Posterior cingulate gyrus (tissue), 11 donors: ENCODE measurements at regions of chr4 and their contacts with region 1.

Region 1: DNA sequence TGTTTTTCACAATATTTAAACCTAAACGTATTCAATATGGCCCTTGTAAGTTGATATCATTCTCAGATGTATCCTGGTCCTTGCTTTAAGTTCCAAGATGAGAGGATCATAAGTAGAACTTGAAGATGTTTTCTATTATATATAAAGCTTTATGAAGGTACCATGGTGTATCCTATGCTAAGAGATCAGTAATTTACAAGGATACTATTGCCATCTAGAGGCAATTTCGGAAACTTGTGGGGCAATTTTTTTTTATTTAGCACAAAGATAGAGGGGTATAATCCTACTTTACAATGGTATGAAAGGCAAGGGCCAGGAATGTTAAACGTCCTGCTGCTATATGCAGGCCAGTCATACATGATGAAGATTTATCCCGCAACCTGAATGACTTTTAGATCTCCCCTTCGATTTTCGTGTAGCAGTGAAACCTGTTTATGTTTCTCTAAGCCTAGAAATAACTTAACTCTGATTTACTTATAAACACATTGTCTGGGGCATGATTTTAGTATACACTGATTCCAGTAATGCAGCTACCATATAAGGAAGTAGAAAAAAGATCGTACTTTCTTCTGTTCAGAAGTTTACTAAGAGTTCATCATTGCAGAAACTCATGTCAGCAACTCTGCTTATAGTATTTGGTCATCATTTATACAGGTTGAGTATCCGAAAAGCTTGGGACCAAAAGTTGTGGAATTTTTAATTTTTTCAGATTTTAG is 2.6 kb downstream of the SLC25A31 start:
- DNase-seq: no peak

Region 2: GRCh38 chr4:127604949-127605709 is 127.6 kb before region 1 on chr4:
- intact Hi-C with region 1: loop called (anchors 1 kb)
- DNase-seq: no peak